ENCODE measurements at regions of chr4 and their contacts with region 1.

Region 1: GRCh38 chr4:125314676-125315575 is at the start of gene FAT4:
- DNase-seq: peak; percentile 89
- H3K4me3 Mint-ChIP-seq: peak within 1 kb of the TSS; percentile 96
- H3K27ac Mint-ChIP-seq: peak within 1 kb of the TSS; percentile 54
- H3K4me1 Mint-ChIP-seq: no peaks in the 10 kb centered on the region
- H3K27me3 Mint-ChIP-seq: no peaks in the 10 kb centered on the region
- CTCF ChIP-seq: no peak
- total RNA-seq, gene FAT4: 4.6 and 4.7 TPM in 2 replicates

Region 2: GRCh38 chr4:125519371-125520146 is 204.6 kb after region 1 on chr4:
- CTCF ChIA-PET with region 1: interaction called, 3 read pairs
- intact Hi-C with region 1: loop called (anchors 1 kb)
- DNase-seq: peak; percentile 28
- H3K4me3 Mint-ChIP-seq: peak overlapping the region; percentile 8
- H3K27ac Mint-ChIP-seq: peak overlapping the region; percentile 96
- H3K4me1 Mint-ChIP-seq: peaks cover 37% of the 10 kb centered on the region
- H3K27me3 Mint-ChIP-seq: no peaks in the 10 kb centered on the region
- CTCF ChIP-seq: no peak

Region 3: GRCh38 chr4:125750828-125751466 is 436.0 kb after region 1 on chr4:
- CTCF ChIA-PET with region 1: interaction called, 31 read pairs
- intact Hi-C with region 1: loop called (anchors 1 kb)
- DNase-seq: peak; percentile 22
- H3K4me3 Mint-ChIP-seq: no peak overlapping the region
- H3K27ac Mint-ChIP-seq: no peak overlapping the region
- H3K4me1 Mint-ChIP-seq: peaks cover 8% of the 10 kb centered on the region
- H3K27me3 Mint-ChIP-seq: no peaks in the 10 kb centered on the region
- CTCF ChIP-seq: peak; percentile 30

Region 4: DNA sequence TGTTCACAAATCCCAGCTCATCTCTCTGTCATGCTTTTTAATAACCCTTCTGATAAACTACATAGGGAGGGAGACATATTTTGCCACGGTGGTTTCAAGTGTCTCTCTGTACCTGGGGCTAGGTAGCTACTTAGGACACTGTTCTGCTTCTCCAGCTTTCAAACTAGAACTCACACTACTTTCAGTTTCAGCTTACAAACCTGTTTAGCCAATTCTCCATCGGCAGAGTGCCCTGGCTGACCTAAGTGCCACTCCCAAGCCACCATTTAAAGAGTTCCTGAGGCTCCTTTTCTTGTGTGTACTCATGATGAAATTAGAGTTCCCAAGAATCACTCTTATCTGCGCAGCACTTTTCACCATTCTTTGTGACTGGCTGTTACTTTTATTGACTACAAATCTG is 899.1 kb after region 1 on chr4:
- CTCF ChIA-PET with region 1: no interaction called
- intact Hi-C with region 1: loop called (anchors 10 kb)
- DNase-seq: peak; percentile 39
- H3K4me3 Mint-ChIP-seq: peak overlapping the region; percentile 58
- H3K27ac Mint-ChIP-seq: peak overlapping the region; percentile 63
- H3K4me1 Mint-ChIP-seq: no peaks in the 10 kb centered on the region
- H3K27me3 Mint-ChIP-seq: no peaks in the 10 kb centered on the region
- CTCF ChIP-seq: no peak

Region 5: DNA sequence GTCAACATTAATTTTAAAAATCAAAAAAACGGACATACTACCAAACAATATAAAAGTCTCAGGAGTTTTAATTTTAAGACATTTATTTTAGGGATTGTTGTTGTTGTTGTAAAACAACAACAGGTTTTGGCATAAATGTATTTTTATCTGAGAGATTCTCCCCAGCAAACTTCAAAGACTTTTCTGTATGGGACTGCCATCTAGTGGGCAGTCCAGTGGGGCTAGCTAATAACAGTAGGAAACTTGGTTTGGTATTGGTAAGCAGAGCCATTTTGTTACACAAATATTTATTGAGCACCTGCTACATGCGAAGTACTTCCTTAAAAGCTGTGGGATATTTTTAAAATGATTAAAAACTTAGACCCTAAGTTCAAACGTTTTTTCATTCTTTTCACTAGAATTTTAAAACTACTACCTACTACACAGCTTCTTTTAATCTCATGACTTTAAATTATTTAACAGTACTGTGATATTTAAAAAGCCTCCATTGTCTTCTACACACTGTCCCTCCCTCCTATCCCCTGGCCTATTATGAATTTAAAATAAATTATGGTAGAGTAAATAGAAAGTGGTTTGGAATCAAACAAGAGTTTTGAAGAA is 1289.4 kb after region 1 on chr4:
- CTCF ChIA-PET with region 1: no interaction called
- intact Hi-C with region 1: loop called (anchors 2 kb)
- DNase-seq: peak; percentile 23
- H3K4me3 Mint-ChIP-seq: no peak overlapping the region
- H3K27ac Mint-ChIP-seq: no peak overlapping the region
- H3K4me1 Mint-ChIP-seq: no peaks in the 10 kb centered on the region
- H3K27me3 Mint-ChIP-seq: no peaks in the 10 kb centered on the region
- CTCF ChIP-seq: no peak